AG04450 (cell line): ENCODE measurements at regions of chr10 and their contacts with region 1.

Region 1: DNA sequence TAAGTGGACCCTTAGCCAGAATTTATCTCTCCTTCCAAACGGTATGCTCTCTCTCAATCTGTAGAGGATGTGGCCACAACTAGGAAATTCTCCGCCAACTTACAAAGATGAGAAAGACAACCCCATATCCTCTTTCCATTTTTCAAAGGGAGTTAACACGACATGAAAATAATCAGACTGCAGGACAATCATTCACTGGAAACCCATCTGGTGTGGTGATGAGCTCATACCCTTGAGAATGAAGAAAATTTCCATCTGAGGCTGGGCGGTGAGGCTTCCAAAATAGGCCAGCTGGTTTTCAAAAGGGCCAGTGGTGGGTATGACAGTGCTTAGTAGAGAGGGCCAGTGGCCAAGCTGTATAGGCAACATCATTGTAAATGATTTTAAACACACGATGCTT is 369.6 kb downstream of the FRMD4A start:
- DNase-seq: peak; percentile 93
- H3K4me3 ChIP-seq: no peak overlapping the region
- H3K27ac ChIP-seq: peak overlapping the region; percentile 66
- H3K27me3 ChIP-seq: no peaks in the 10 kb centered on the region
- CTCF ChIP-seq: no peak

Region 2: GRCh38 chr10:13659897-13660550 is 301.1 kb before region 1 on chr10:
- CTCF ChIA-PET with region 1: interaction called, 3 read pairs
- POLR2A ChIA-PET with region 1: interaction called, 13 read pairs
- DNase-seq: peak; percentile 21
- H3K4me3 ChIP-seq: no peak overlapping the region
- H3K27ac ChIP-seq: peak overlapping the region; percentile 12
- H3K27me3 ChIP-seq: no peaks in the 10 kb centered on the region
- CTCF ChIP-seq: peak; percentile 93

Region 3: DNA sequence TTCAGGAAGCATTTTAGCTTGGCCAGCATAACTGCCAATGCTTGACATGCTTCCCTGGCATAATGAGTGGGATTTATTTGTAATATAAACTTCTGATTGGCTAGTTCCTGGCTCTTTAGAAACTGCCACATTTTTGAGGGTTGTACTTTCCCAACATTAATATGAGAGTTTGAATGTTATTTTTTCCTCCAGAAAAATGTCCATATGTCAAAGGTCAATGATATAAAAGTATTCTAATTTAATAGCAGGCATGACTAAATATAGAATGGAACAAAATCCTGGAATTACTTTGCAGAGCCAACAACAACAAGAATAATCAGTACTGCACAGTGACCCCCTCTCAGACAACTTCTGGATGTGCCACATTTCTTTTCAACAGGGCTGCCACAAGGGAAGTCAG is 21.7 kb before region 1 on chr10:
- CTCF ChIA-PET with region 1: no interaction called
- POLR2A ChIA-PET with region 1: no interaction called
- DNase-seq: no peak
- H3K4me3 ChIP-seq: no peak overlapping the region
- H3K27ac ChIP-seq: no peak overlapping the region
- H3K27me3 ChIP-seq: no peaks in the 10 kb centered on the region
- CTCF ChIP-seq: no peak

Region 4: DNA sequence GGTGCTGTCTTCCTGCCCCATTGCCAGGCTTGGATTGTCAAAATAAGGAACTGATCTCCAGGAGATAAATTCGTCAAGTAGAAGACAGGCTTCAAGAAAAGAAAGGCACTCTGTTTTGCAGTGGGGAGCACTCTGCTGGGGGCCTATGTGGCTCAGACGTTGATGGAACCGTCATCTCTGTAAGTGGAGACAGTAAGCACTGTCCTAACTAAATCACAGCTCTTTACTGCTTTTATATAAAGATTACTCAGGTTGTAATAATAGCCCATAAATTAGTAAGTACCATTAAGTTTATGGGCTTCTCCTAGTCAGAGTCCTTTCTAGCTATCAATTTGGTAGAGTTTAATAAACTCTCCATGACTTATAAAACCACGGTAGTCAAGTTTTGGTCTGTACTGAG is 119.7 kb after region 1 on chr10:
- CTCF ChIA-PET with region 1: no interaction called
- POLR2A ChIA-PET with region 1: no interaction called
- DNase-seq: no peak
- H3K4me3 ChIP-seq: no peak overlapping the region
- H3K27ac ChIP-seq: no peak overlapping the region
- H3K27me3 ChIP-seq: no peaks in the 10 kb centered on the region
- CTCF ChIP-seq: no peak

Region 5: DNA sequence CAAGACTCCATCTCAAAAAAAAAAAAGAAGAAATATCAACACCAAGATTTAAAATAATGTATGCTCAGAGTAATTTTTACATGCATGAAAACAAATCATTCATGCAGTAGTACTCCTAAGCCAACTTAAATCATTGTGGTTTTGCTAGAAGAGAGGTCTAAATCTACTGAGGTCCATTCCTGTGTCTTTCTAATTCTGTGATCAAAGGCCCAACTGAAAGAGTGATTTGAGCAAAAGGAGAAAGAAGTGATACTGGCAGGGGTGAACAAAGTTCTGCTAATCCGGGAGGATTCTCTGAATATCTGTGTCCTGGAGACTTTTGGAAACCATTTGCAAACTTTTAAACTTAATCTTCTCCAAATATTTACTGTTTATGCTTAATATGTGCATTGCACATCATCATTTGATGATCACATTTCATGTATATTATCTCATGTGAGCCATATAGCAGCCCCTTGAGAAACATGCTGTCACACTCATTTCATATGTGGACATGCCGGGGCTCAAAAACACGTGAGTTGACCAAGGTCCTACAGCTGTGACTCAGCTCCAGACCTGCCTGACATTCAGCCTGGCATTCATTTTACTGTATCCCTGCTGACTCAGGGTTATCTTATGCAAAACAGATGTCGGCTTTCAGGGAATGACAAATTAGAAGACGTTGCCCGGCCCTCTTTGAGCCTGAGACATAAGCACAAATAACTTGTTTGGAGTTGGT is 737.2 kb after region 1 on chr10:
- CTCF ChIA-PET with region 1: no interaction called
- POLR2A ChIA-PET with region 1: no interaction called
- DNase-seq: peak; percentile 37
- H3K4me3 ChIP-seq: no peak overlapping the region
- H3K27ac ChIP-seq: peak overlapping the region; percentile 21
- H3K27me3 ChIP-seq: no peaks in the 10 kb centered on the region
- CTCF ChIP-seq: no peak